Caco-2 (cell line): ENCODE measurements at regions of chr18 and their contacts with region 1.

Region 1: DNA sequence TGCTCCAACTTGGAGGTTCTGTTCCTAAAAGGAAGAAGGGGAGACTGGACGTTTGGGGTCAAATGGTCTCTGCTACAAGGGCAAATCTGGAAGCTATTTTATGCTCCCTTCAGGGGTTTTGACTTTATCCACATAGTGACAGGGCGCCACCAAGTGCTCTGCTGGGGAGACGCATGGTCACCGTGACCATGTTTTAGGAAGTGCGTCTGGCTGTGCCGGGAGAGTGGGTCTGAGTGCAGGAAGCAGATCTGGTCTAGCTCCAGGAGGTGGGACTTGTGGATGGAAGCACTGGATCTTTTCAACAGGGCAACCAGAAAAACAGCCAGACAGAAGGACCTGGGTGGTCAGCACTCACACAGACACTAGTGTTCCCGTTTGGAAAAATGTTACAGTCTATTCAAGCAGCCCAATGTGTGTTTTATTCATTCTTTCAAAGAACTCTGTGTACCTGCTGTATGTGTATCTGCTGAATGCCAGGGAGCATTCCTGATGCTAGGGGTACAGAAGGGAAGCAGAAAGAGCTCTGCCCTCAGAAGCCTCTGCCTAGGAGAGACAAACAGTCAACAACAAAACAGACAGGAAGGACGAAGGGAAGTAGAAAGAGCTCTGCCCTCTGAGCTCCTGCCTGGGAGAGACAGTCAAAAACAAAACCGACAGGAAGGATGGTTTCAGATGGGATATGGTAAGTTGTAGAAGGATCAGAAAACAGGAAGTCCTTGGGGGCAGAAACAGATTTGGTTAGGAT is 14.3 kb downstream of the IMPA2 start:
- DNase-seq: peak; percentile 71 to 73
- H3K4me3 ChIP-seq: no peak overlapping the region
- H3K4me3 Mint-ChIP-seq: no peak overlapping the region
- H3K27ac Mint-ChIP-seq: peak overlapping the region; percentile 84
- H3K4me1 ChIP-seq: peaks cover 16% of the 10 kb centered on the region
- H3K4me1 Mint-ChIP-seq: peaks cover 29% of the 10 kb centered on the region
- H3K27me3 ChIP-seq: no peaks in the 10 kb centered on the region
- H3K27me3 Mint-ChIP-seq: no peaks in the 10 kb centered on the region
- CTCF ChIP-seq: peak; percentile 69 to 84

Region 2: GRCh38 chr18:11733031-11733430 is 262.6 kb before region 1 on chr18:
- CTCF ChIA-PET with region 1: interaction called, 14 read pairs
- POLR2A ChIA-PET with region 1: no interaction called
- intact Hi-C with region 1: loop called (anchors 1 kb)
- DNase-seq: peak; percentile 81 to 88
- H3K4me3 ChIP-seq: no peak overlapping the region
- H3K4me3 Mint-ChIP-seq: no peak overlapping the region
- H3K27ac Mint-ChIP-seq: no peak overlapping the region
- H3K4me1 ChIP-seq: peaks cover 4% of the 10 kb centered on the region; the same call in 1 of the 2 replicates
- H3K4me1 Mint-ChIP-seq: no peaks in the 10 kb centered on the region
- H3K27me3 ChIP-seq: no peaks in the 10 kb centered on the region
- H3K27me3 Mint-ChIP-seq: no peaks in the 10 kb centered on the region
- CTCF ChIP-seq: peak; percentile 92 to 96

Region 3: GRCh38 chr18:11932393-11932792 is 63.2 kb before region 1 on chr18:
- CTCF ChIA-PET with region 1: interaction called, 62 read pairs
- POLR2A ChIA-PET with region 1: no interaction called
- intact Hi-C with region 1: no loop called
- DNase-seq: peak in 1 of 2 experiments; percentile 33
- H3K4me3 ChIP-seq: no peak overlapping the region
- H3K4me3 Mint-ChIP-seq: no peak overlapping the region
- H3K27ac Mint-ChIP-seq: no peak overlapping the region
- H3K4me1 ChIP-seq: peaks cover 7% of the 10 kb centered on the region
- H3K4me1 Mint-ChIP-seq: no peaks in the 10 kb centered on the region
- H3K27me3 ChIP-seq: no peaks in the 10 kb centered on the region
- H3K27me3 Mint-ChIP-seq: no peaks in the 10 kb centered on the region
- CTCF ChIP-seq: no peak

Region 4: DNA sequence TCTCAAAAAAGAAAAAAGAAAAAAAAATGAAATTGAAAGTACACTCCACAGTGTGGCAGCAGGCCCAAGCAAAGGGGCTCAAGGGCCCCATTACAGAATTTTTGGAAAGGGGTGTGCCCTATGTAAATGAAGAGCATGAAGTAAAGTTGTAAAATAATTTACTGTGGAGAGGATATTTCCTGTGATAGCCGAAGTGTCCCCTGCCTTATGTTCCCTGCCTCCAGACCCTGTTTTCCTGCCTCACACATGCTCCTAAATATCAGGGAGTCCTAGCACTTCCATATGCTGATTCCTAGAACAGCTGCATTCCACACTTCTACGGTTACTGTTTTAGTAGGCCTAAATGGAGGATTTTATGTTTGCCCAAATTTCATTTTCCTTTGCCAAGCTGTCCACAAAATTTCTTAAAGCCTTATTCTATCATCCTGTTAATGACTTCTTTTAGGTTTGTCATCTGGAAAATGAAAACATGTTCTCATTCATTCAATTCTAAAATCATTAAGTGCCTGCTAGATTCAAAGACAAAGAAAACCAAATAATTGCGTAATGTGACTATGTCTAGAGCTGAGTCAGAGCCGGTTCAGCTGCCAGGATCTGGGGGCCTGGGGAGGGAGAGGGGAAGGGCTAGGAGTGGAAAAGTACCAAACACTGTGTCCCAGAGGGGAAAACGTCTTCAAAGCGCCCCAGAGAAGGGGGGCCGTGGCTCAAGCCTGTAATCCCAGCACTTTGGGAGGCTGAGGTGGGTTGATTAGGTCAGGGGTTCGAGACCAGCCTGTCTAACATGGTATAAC is 40.2 kb before region 1 on chr18:
- CTCF ChIA-PET with region 1: interaction called, 4 read pairs
- POLR2A ChIA-PET with region 1: no interaction called
- intact Hi-C with region 1: loop called (anchors 1 kb)
- DNase-seq: no peak
- H3K4me3 ChIP-seq: no peak overlapping the region
- H3K4me3 Mint-ChIP-seq: no peak overlapping the region
- H3K27ac Mint-ChIP-seq: peak overlapping the region; percentile 37
- H3K4me1 ChIP-seq: peaks cover 7% of the 10 kb centered on the region; the same call in 1 of the 2 replicates
- H3K4me1 Mint-ChIP-seq: peaks cover 17% of the 10 kb centered on the region
- H3K27me3 ChIP-seq: no peaks in the 10 kb centered on the region
- H3K27me3 Mint-ChIP-seq: no peaks in the 10 kb centered on the region
- CTCF ChIP-seq: no peak